Activated T-helper 1 cell treated with anti-CD3 and anti-CD28 coated beads, Interleukin-12 subunit alpha, Interleukin-12 subunit beta, Interleukin-2, Interleukin-4 antibody, amounts not matched to agents 30 ng/mL and 10 ng/mL and 1 ng/mL, durations not matched to agents 14 hours and 24 hours and 36 hours (primary cell): ENCODE measurements at regions of chr7 and their contacts with region 1.

Region 1: DNA sequence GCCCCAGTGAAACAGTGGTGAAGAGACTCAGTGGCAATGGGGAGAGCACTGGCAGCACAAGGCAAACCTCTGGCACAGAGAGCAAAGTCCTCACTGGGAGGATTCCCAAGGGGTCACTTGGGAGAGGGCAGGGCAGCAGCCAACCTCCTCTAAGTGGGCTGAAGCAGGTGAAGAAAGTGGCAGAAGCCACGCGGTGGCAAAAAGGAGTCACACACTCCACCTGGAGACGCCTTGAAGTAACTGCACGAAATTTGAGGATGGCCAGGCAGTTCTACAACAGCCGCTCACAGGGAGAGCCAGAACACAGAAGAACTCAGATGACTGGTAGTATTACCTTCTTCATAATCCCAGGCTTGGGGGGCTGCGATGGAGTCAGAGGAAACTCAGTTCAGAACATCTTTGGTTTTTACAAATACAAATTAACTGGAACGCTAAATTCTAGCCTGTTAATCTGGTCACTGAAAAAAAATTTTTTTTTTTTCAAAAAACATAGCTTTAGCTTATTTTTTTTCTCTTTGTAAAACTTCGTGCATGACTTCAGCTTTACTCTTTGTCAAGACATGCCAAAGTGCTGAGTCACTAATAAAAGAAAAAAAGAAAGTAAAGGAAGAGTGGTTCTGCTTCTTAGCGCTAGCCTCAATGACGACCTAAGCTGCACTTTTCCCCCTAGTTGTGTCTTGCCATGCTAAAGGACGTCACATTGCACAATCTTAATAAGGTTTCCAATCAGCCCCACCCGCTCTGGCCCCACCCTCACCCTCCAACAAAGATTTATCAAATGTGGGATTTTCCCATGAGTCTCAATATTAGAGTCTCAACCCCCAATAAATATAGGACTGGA is 435 bp upstream of the IL6 start:
- DNase-seq: peak; percentile 46
- H3K4me3 Mint-ChIP-seq: peak overlapping the region; percentile 32
- H3K27ac Mint-ChIP-seq: no peak overlapping the region
- H3K4me1 Mint-ChIP-seq: peaks cover 48% of the 10 kb centered on the region
- H3K27me3 Mint-ChIP-seq: peaks cover 29% of the 10 kb centered on the region

Region 2: GRCh38 chr7:22559829-22560489 is 166.6 kb before region 1 on chr7:
- intact Hi-C with region 1: loop called (anchors 1 kb)
- DNase-seq: peak; percentile 55
- H3K4me3 Mint-ChIP-seq: no peak overlapping the region
- H3K27ac Mint-ChIP-seq: no peak overlapping the region
- H3K4me1 Mint-ChIP-seq: peaks cover 44% of the 10 kb centered on the region
- H3K27me3 Mint-ChIP-seq: peaks cover 9% of the 10 kb centered on the region

Region 3: DNA sequence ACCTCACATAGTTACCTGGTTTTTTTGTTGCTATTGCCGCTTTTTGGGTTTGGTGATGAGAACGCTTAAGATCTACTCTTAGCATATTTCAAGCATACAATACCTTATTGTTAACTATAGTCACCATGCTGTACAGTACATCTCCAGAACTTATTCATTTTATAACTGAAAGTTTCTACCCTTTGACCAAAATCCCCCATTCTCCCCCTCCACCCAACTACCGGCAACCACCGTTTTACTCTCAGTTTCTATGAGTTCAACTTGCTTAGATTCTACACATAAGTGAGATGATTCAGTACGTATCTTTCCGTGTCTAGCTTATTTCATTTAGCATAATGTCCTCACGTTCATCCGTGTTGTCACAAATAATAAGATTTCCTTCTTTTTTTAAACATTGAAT is 86.3 kb before region 1 on chr7:
- intact Hi-C with region 1: loop called (anchors 1 kb)
- DNase-seq: peak; percentile 24
- H3K4me3 Mint-ChIP-seq: no peak overlapping the region
- H3K27ac Mint-ChIP-seq: peak overlapping the region; percentile 3
- H3K4me1 Mint-ChIP-seq: peaks cover 16% of the 10 kb centered on the region
- H3K27me3 Mint-ChIP-seq: peaks cover 11% of the 10 kb centered on the region

Region 4: GRCh38 chr7:22667562-22668239 is 58.9 kb before region 1 on chr7:
- intact Hi-C with region 1: loop called (anchors 2 kb)
- DNase-seq: no peak
- H3K4me3 Mint-ChIP-seq: no peak overlapping the region
- H3K27ac Mint-ChIP-seq: no peak overlapping the region
- H3K4me1 Mint-ChIP-seq: peaks cover 52% of the 10 kb centered on the region
- H3K27me3 Mint-ChIP-seq: peaks cover 8% of the 10 kb centered on the region

Region 5: DNA sequence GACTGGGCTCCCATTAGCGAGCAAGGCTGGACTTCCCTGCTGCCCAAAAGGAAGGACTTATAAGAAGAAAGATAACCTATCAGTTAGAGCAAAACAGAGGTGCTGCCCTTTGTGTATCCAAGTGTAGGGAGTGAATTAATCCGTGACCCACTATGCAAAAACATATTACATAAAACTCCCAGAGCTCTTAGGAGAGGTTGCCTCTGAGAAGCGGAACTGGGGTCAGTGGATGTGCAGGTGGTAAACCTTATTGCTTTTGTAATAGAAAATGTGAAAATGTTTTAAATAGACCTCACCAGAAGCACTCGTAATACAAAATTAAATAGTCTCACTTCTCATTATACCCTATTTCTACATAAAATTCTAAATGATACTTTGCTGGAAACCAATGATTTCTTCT is 16.7 kb before region 1 on chr7:
- intact Hi-C with region 1: loop called (anchors 2 kb)
- DNase-seq: no peak
- H3K4me3 Mint-ChIP-seq: no peak overlapping the region
- H3K27ac Mint-ChIP-seq: no peak overlapping the region
- H3K4me1 Mint-ChIP-seq: peaks cover 12% of the 10 kb centered on the region
- H3K27me3 Mint-ChIP-seq: peaks cover under 1% of the 10 kb centered on the region

Region 6: DNA sequence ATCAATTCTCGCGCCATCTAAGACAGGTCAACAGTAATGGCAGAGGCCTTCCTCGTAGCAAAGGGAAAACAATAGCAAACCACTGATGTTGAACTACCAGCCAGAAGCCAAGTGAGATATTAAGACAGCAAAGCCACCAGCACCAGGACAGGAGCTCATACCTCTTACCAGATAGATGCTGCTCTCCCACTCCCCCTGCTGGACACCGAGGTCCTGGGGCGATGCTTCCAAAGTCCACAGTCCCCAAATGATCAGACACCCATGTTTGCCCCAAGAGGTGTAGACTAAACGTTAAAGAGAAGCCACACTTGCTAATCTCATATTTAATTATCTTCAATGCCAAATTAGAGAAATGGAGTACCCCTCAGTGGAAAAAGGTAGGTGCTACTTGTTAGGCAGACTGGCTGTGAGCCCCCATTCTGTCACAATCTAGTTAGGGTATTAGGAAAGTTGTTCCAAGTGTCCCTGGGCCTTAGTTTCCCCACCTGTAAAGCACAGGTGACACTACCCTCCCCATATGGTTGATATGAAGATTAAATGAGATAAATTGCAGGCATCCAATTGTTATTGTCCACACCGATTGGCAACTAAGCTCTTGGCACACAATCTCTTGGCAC is 56.2 kb after region 1 on chr7:
- intact Hi-C with region 1: loop called (anchors 1 kb)
- DNase-seq: peak; percentile 57
- H3K4me3 Mint-ChIP-seq: no peak overlapping the region
- H3K27ac Mint-ChIP-seq: no peak overlapping the region
- H3K4me1 Mint-ChIP-seq: no peaks in the 10 kb centered on the region
- H3K27me3 Mint-ChIP-seq: peaks cover 8% of the 10 kb centered on the region